ENCODE measurements at regions of chr1 and their contacts with region 1.

Region 1: GRCh38 chr1:44696789-44697345 is 22.4 kb downstream of the ARMH1 start:
- DNase-seq: peak; percentile 73
- H3K4me3 ChIP-seq: peak overlapping the region; percentile 25
- H3K27ac ChIP-seq: peak overlapping the region; percentile 80
- H3K4me1 ChIP-seq: peaks cover 57% of the 10 kb centered on the region
- CTCF ChIP-seq: no peak

Region 2: GRCh38 chr1:44674113-44675000 is 22.5 kb before region 1 on chr1 and contains the starts of genes ARMH1 and TMEM53:
- CTCF ChIA-PET with region 1: interaction called, 6 read pairs
- POLR2A ChIA-PET with region 1: interaction called, 27 read pairs
- intact Hi-C with region 1: loop called (anchors 2 kb)
- DNase-seq: peak; percentile 99
- H3K4me3 ChIP-seq: peak within 1 kb of the TSS; percentile 73
- H3K27ac ChIP-seq: peak within 1 kb of the TSS; percentile 53
- H3K4me1 ChIP-seq: peaks cover 54% of the 10 kb centered on the region
- CTCF ChIP-seq: peak; percentile 57
- total RNA-seq, gene ARMH1: 5.3 and 7.8 TPM in 2 replicates
- total RNA-seq, gene TMEM53: 5.5 and 6.6 TPM in 2 replicates

Region 3: DNA sequence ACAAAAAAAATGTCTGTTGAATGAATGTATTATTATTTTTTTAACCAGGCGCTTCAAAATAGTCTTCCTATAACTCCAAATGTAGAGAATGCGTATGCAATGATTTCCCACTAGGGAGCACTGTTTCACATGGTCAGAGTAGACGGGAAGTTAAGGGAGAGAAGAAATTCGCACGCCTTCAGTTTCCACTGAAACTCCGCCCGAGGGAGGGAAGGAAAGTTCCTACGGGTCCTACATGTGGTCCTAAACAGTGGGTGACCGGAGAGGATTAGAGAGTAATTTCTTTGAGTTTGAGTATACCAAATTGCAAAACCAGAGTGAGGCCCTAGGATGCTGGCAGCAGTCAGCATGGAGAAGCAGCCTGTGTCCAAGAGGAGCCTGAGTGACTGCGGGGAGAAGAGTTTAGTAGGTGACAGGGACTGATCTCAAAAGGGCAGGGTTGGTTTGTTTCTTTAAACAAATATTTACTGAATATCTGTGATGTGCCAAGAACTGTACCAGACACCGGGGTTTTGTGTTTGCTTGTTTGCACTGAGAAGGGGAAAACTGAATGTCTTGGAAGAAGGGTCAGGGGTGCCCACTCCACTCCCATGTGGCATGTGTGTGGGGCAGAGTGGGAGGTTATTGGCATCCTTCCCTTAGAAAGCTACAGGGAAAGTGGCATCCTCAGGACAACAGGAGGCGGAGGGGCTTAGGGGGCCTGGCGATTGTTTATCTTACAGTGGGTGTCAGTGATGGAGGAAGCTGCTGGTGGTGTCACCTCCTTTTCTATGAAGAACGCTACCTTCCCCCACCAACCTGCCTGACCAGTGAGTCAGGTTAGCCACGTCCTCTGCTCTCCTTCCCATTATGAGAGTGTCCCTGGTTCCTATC is 11.3 kb after region 1 on chr1:
- CTCF ChIA-PET with region 1: interaction called, 11 read pairs
- POLR2A ChIA-PET with region 1: interaction called, 69 read pairs
- intact Hi-C with region 1: loop called (anchors 2 kb)
- DNase-seq: peak; percentile 79
- H3K4me3 ChIP-seq: peak overlapping the region; percentile 12
- H3K27ac ChIP-seq: peak overlapping the region; percentile 14
- H3K4me1 ChIP-seq: peaks cover 44% of the 10 kb centered on the region
- CTCF ChIP-seq: peak; percentile 97

Measured in OCI-LY7 (cell line).